CD8-positive, alpha-beta T cell (primary cell): ENCODE measurements at regions of chr20 and their contacts with region 1.

Region 1: GRCh38 chr20:59571551-59572314 is 32.6 kb upstream of the PHACTR3 start:
- DNase-seq: peak in 8 of 9 experiments; percentile 31 to 70 (median 55)
- ATAC-seq: peak; percentile 61
- H3K4me3 ChIP-seq: peak overlapping the region; percentile 37 to 51
- H3K4me3 Mint-ChIP-seq: peak overlapping the region; percentile 70
- H3K27ac ChIP-seq: no peak overlapping the region
- H3K27ac Mint-ChIP-seq: no peak overlapping the region
- H3K4me1 ChIP-seq: peaks cover 3% of the 10 kb centered on the region
- H3K4me1 Mint-ChIP-seq: peaks cover 9% of the 10 kb centered on the region
- H3K27me3 ChIP-seq: peaks cover 0 to 6% of the 10 kb centered on the region in 2 experiments
- H3K27me3 Mint-ChIP-seq: peaks cover 42% of the 10 kb centered on the region
- CTCF ChIP-seq: peak; percentile 99

Region 2: DNA sequence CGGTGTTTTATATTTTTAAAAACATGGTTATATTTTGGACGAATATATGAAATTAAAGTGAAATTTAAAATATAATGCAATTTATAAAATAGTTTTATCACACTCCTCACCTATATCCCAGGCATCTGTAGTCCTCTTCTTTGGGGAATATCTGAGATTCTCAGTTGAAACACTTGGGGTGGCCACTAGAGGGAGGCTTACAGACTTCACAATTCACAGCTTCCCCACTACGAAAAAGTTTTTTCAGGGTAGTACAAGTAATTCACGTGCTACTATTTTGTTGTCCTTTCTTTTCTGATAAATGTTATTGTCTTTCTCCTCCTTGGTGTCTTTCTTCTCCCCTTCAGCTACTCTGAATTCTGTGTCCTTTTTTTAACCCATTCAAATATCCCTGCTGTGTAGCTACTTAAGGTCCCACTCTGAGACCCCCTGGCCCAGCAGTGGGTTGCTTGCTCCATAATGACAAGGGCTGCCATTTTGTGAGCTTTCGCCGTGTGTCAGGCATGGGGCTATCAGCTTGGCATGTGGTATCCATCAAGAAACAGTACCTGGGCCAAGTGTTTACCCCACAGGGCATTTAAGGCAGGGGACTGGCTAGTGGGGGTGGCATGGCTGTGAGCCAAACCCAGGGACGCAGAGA is 11.0 kb before region 1 on chr20:
- CTCF ChIA-PET with region 1: interaction called, 62 read pairs
- POLR2A ChIA-PET with region 1: no interaction called
- intact Hi-C with region 1: no loop called
- DNase-seq: no peak
- ATAC-seq: no peak
- H3K4me3 ChIP-seq: no peak overlapping the region
- H3K4me3 Mint-ChIP-seq: no peak overlapping the region
- H3K27ac ChIP-seq: no peak overlapping the region
- H3K27ac Mint-ChIP-seq: no peak overlapping the region
- H3K4me1 ChIP-seq: no peaks in the 10 kb centered on the region
- H3K4me1 Mint-ChIP-seq: no peaks in the 10 kb centered on the region
- H3K27me3 ChIP-seq: peaks cover 0 to 2% of the 10 kb centered on the region in 2 experiments
- H3K27me3 Mint-ChIP-seq: peaks cover 8% of the 10 kb centered on the region
- CTCF ChIP-seq: peak; percentile 61

Region 3: GRCh38 chr20:59585714-59586409 is 14.1 kb after region 1 on chr20:
- CTCF ChIA-PET with region 1: interaction called, 37 read pairs
- POLR2A ChIA-PET with region 1: no interaction called
- intact Hi-C with region 1: no loop called
- DNase-seq: no peak
- ATAC-seq: no peak
- H3K4me3 ChIP-seq: no peak overlapping the region
- H3K4me3 Mint-ChIP-seq: no peak overlapping the region
- H3K27ac ChIP-seq: no peak overlapping the region
- H3K27ac Mint-ChIP-seq: no peak overlapping the region
- H3K4me1 ChIP-seq: peaks cover 3% of the 10 kb centered on the region
- H3K4me1 Mint-ChIP-seq: peaks cover 10% of the 10 kb centered on the region
- H3K27me3 ChIP-seq: no peaks in the 10 kb centered on the region
- H3K27me3 Mint-ChIP-seq: peaks cover 2% of the 10 kb centered on the region
- CTCF ChIP-seq: no peak

Region 4: GRCh38 chr20:60553095-60553494 is 981.4 kb after region 1 on chr20:
- CTCF ChIA-PET with region 1: no interaction called
- POLR2A ChIA-PET with region 1: no interaction called
- intact Hi-C with region 1: no loop called
- DNase-seq: no peak
- ATAC-seq: no peak
- H3K4me3 ChIP-seq: no peak overlapping the region
- H3K4me3 Mint-ChIP-seq: no peak overlapping the region
- H3K27ac ChIP-seq: no peak overlapping the region
- H3K27ac Mint-ChIP-seq: no peak overlapping the region
- H3K4me1 ChIP-seq: no peaks in the 10 kb centered on the region
- H3K4me1 Mint-ChIP-seq: no peaks in the 10 kb centered on the region
- H3K27me3 ChIP-seq: no peaks in the 10 kb centered on the region
- H3K27me3 Mint-ChIP-seq: peaks cover 12% of the 10 kb centered on the region
- CTCF ChIP-seq: no peak